ENCODE measurements at regions of chr6 and their contacts with region 1.

Region 1: GRCh38 chr6:108294727-108295625 is at the start of gene AFG1L:
- DNase-seq: peak; percentile 92
- H3K4me3 Mint-ChIP-seq: peak within 1 kb of the TSS; percentile 94
- H3K27ac Mint-ChIP-seq: peak within 1 kb of the TSS; percentile 98
- H3K4me1 Mint-ChIP-seq: peaks cover 18% of the 10 kb centered on the region
- H3K27me3 Mint-ChIP-seq: no peaks in the 10 kb centered on the region
- total RNA-seq, gene AFG1L: 5.3 to 6.3 TPM

Region 2: GRCh38 chr6:108074359-108075144 is 220.4 kb before region 1 on chr6 and contains the start of gene OSTM1:
- CTCF ChIA-PET with region 1: no interaction called
- POLR2A ChIA-PET with region 1: no interaction called
- intact Hi-C with region 1: loop called (anchors 1 kb)
- DNase-seq: peak; percentile 95
- H3K4me3 Mint-ChIP-seq: peak within 1 kb of the TSS; percentile 80
- H3K27ac Mint-ChIP-seq: peak within 1 kb of the TSS; percentile 65
- H3K4me1 Mint-ChIP-seq: peaks cover 24% of the 10 kb centered on the region
- H3K27me3 Mint-ChIP-seq: no peaks in the 10 kb centered on the region
- total RNA-seq, gene OSTM1: 14.0 to 16.3 TPM

Region 3: GRCh38 chr6:108168501-108169463 is 126.2 kb before region 1 on chr6:
- CTCF ChIA-PET with region 1: no interaction called
- POLR2A ChIA-PET with region 1: no interaction called
- intact Hi-C with region 1: loop called (anchors 5 kb)
- DNase-seq: peak; percentile 37
- H3K4me3 Mint-ChIP-seq: peak overlapping the region; percentile 48
- H3K27ac Mint-ChIP-seq: no peak overlapping the region
- H3K4me1 Mint-ChIP-seq: peaks cover 40% of the 10 kb centered on the region
- H3K27me3 Mint-ChIP-seq: peaks cover 84% of the 10 kb centered on the region

Region 4: GRCh38 chr6:108312605-108313004 is 17.6 kb after region 1 on chr6:
- CTCF ChIA-PET with region 1: no interaction called
- POLR2A ChIA-PET with region 1: no interaction called
- intact Hi-C with region 1: no loop called
- DNase-seq: no peak
- H3K4me3 Mint-ChIP-seq: no peak overlapping the region
- H3K27ac Mint-ChIP-seq: no peak overlapping the region
- H3K4me1 Mint-ChIP-seq: no peaks in the 10 kb centered on the region
- H3K27me3 Mint-ChIP-seq: no peaks in the 10 kb centered on the region

Region 5: DNA sequence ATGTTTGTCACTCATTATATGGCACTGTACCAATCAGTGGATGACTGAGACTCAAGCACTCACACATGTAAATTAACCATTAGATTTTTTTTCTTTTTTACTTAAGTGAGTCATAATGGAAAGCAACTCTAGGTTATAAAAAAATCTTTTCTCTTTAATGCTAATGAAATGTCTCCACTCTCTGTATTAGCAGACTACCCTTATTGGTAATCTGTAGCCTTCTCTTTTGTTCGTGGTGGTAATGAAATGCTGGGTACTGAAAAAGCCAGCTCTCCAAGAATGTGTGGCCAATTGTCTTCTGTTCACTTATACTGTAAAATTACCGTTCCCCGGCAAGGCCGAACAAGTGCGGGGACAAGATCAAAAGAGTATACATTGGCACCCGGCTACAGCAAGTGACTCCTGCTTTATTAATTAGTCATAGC is 68.9 kb after region 1 on chr6:
- CTCF ChIA-PET with region 1: no interaction called
- POLR2A ChIA-PET with region 1: no interaction called
- intact Hi-C with region 1: no loop called
- DNase-seq: no peak
- H3K4me3 Mint-ChIP-seq: no peak overlapping the region
- H3K27ac Mint-ChIP-seq: no peak overlapping the region
- H3K4me1 Mint-ChIP-seq: peaks cover 3% of the 10 kb centered on the region
- H3K27me3 Mint-ChIP-seq: no peaks in the 10 kb centered on the region

Region 6: GRCh38 chr6:108446629-108447150 is 151.7 kb after region 1 on chr6:
- CTCF ChIA-PET with region 1: no interaction called
- POLR2A ChIA-PET with region 1: no interaction called
- intact Hi-C with region 1: loop called (anchors 1 kb)
- DNase-seq: no peak
- H3K4me3 Mint-ChIP-seq: no peak overlapping the region
- H3K27ac Mint-ChIP-seq: no peak overlapping the region
- H3K4me1 Mint-ChIP-seq: peaks cover 16% of the 10 kb centered on the region
- H3K27me3 Mint-ChIP-seq: peaks cover 16% of the 10 kb centered on the region